Activated CD4-positive, alpha-beta memory T cell treated with anti-CD3 and anti-CD28 coated beads for 36 hours (primary cell): ENCODE measurements at regions of chr3 and their contacts with region 1.

Region 1: DNA sequence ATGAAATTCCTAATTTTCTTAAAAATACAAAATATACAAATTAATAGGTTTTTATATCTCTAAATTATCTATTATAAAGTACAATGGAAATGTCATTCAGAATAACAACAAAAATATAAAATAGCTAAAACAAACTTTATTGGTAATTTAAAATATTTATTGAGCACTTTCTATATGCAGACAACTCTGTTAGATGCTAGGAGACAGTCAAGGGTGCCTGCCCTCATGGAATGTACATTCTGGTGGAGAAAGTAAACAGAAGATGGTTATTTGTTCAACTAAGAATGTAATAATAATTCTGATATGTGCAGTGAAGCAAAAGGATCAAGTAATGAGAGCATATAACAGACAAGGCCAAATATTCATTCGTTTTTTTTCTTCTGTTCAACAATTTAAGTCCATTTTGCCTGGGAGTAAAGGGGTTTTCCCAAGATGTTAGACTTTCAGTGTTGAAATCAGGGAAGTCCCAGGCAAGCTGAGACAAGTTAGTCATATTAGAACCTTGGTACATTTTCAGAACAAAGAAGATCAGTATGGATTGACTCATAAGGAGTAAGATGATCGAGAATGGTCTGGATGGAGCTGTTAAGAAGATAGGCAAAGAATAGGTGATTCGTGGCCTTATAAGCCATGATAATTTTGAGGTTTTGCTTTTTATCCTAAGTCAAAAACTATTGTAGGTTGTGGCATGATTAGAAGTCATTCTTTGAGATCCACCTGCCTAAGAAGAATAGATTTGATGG is 150.2 kb upstream of the MLF1 start:
- DNase-seq: no peak
- H3K4me3 Mint-ChIP-seq: no peak overlapping the region
- H3K27ac Mint-ChIP-seq: no peak overlapping the region
- H3K4me1 Mint-ChIP-seq: peaks cover 8% of the 10 kb centered on the region
- H3K27me3 Mint-ChIP-seq: no peaks in the 10 kb centered on the region

Region 2: GRCh38 chr3:158384019-158384418 is 36.8 kb before region 1 on chr3:
- CTCF ChIA-PET with region 1: no interaction called
- POLR2A ChIA-PET with region 1: no interaction called
- intact Hi-C with region 1: loop called (anchors 2 kb)
- DNase-seq: no peak
- H3K4me3 Mint-ChIP-seq: no peak overlapping the region
- H3K27ac Mint-ChIP-seq: no peak overlapping the region
- H3K4me1 Mint-ChIP-seq: no peaks in the 10 kb centered on the region
- H3K27me3 Mint-ChIP-seq: no peaks in the 10 kb centered on the region

Region 3: GRCh38 chr3:158443632-158444031 is 22.8 kb after region 1 on chr3:
- CTCF ChIA-PET with region 1: no interaction called
- POLR2A ChIA-PET with region 1: no interaction called
- intact Hi-C with region 1: loop called (anchors 1 kb)
- DNase-seq: peak; percentile 9
- H3K4me3 Mint-ChIP-seq: no peak overlapping the region
- H3K27ac Mint-ChIP-seq: no peak overlapping the region
- H3K4me1 Mint-ChIP-seq: peaks cover 11% of the 10 kb centered on the region
- H3K27me3 Mint-ChIP-seq: no peaks in the 10 kb centered on the region